ENCODE measurements at regions of chr1 and their contacts with region 1.

Region 1: DNA sequence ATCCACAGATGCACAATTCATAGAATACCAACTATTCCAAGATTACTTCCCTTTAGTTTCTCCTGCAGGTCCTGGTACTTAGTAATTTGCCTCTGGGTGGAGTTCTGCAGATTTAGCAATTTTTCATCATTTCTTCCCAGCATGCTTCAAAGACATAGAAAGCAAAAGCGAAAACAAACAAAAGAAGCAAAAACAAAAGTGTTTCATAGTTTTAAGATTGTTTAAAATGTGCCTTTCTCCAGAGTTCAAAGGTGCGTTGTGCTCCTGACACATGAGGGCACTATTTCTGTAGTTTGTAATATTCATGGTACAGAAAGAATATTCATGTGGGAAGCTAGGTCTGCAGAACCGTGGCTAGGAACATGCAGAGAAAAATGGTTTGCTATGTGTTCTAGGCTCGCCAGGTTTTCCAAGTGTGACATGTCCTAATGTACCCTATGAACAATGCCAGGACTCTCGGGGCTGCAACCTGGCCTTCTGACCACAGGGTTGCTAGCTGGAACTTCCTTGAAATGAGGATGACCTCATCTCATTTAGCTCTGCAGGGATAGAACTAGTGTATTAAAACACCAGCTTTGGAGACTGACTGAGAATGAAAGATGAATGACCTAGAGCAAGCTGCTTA is 30.0 kb upstream of the RCSD1 start:
- DNase-seq: peak; percentile 66
- ATAC-seq: peak; percentile 77
- H3K4me3 Mint-ChIP-seq: peak overlapping the region; percentile 54
- H3K27ac Mint-ChIP-seq: peak overlapping the region; percentile 77
- H3K4me1 Mint-ChIP-seq: peaks cover 41% of the 10 kb centered on the region
- H3K27me3 Mint-ChIP-seq: no peaks in the 10 kb centered on the region
- CTCF ChIP-seq: peak; percentile 62

Region 2: GRCh38 chr1:167563579-167564246 is 36.4 kb before region 1 on chr1:
- CTCF ChIA-PET with region 1: interaction called, 10 read pairs
- POLR2A ChIA-PET with region 1: no interaction called
- intact Hi-C with region 1: no loop called
- DNase-seq: no peak
- ATAC-seq: no peak
- H3K4me3 Mint-ChIP-seq: no peak overlapping the region
- H3K27ac Mint-ChIP-seq: peak overlapping the region; percentile 32
- H3K4me1 Mint-ChIP-seq: peaks cover 3% of the 10 kb centered on the region
- H3K27me3 Mint-ChIP-seq: no peaks in the 10 kb centered on the region
- CTCF ChIP-seq: no peak

Region 3: DNA sequence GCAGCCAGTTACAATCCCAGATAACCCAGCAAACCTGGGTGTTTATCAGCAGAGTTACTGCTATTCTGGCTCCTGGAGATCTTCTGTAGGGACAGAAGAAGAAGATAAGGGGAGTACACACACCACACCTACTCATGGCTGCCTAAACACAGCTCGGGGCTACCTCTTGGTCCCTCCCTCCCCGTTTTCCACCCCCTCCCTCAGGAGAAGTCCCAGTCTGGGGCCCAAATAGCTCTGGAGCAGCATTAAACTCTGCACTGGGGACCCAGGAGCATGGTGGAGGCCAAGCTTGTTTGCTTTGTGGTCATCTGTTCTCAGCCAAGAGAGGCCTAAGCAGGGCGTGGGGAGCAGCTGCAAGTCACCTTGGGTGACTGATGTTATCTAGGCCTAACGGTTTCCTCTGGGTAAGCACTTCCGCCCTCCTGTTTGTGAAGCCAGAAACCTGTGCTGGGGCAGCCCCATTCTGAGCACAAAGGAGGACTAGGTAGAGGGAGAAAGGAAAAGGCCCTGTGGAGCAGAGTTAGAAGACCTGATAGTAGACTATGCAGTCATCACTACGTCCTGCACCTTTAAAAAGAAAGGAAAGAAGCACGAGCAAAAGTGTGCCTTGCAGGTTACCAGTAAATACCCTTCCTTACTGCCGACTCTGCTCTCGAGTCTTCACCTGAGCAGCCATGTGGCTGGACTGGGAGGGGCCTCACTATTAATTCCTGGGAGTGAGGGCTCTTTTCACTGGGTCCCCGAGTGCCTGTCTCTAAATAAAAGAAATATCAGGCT is 28.0 kb after region 1 on chr1:
- CTCF ChIA-PET with region 1: interaction called, 35 read pairs
- POLR2A ChIA-PET with region 1: interaction called, 40 read pairs
- intact Hi-C with region 1: no loop called
- DNase-seq: peak; percentile 90
- ATAC-seq: peak; percentile 79
- H3K4me3 Mint-ChIP-seq: peak overlapping the region; percentile 89
- H3K27ac Mint-ChIP-seq: peak overlapping the region; percentile 95
- H3K4me1 Mint-ChIP-seq: peaks cover 41% of the 10 kb centered on the region
- H3K27me3 Mint-ChIP-seq: no peaks in the 10 kb centered on the region
- CTCF ChIP-seq: no peak

Region 4: GRCh38 chr1:167650269-167651160 is 50.4 kb after region 1 on chr1:
- CTCF ChIA-PET with region 1: interaction called, 22 read pairs
- POLR2A ChIA-PET with region 1: no interaction called
- intact Hi-C with region 1: no loop called
- DNase-seq: peak; percentile 41
- ATAC-seq: peak; percentile 68
- H3K4me3 Mint-ChIP-seq: peak overlapping the region; percentile 11
- H3K27ac Mint-ChIP-seq: peak overlapping the region; percentile 68
- H3K4me1 Mint-ChIP-seq: peaks cover 79% of the 10 kb centered on the region
- H3K27me3 Mint-ChIP-seq: no peaks in the 10 kb centered on the region
- CTCF ChIP-seq: no peak

Region 5: GRCh38 chr1:167715157-167715999 is 115.3 kb after region 1 on chr1:
- CTCF ChIA-PET with region 1: interaction called, 20 read pairs
- POLR2A ChIA-PET with region 1: interaction called, 3 read pairs
- intact Hi-C with region 1: no loop called
- DNase-seq: peak; percentile 95
- ATAC-seq: peak; percentile 58
- H3K4me3 Mint-ChIP-seq: peak overlapping the region; percentile 90
- H3K27ac Mint-ChIP-seq: peak overlapping the region; percentile 95
- H3K4me1 Mint-ChIP-seq: peaks cover 28% of the 10 kb centered on the region
- H3K27me3 Mint-ChIP-seq: peaks cover 6% of the 10 kb centered on the region
- CTCF ChIP-seq: peak; percentile 87

Measured in activated CD8-positive, alpha-beta T cell treated with anti-CD3 and anti-CD28 coated beads for 36 hours (primary cell).